Caco-2 (cell line): ENCODE measurements at regions of chr6 and their contacts with region 1.

Region 1: DNA sequence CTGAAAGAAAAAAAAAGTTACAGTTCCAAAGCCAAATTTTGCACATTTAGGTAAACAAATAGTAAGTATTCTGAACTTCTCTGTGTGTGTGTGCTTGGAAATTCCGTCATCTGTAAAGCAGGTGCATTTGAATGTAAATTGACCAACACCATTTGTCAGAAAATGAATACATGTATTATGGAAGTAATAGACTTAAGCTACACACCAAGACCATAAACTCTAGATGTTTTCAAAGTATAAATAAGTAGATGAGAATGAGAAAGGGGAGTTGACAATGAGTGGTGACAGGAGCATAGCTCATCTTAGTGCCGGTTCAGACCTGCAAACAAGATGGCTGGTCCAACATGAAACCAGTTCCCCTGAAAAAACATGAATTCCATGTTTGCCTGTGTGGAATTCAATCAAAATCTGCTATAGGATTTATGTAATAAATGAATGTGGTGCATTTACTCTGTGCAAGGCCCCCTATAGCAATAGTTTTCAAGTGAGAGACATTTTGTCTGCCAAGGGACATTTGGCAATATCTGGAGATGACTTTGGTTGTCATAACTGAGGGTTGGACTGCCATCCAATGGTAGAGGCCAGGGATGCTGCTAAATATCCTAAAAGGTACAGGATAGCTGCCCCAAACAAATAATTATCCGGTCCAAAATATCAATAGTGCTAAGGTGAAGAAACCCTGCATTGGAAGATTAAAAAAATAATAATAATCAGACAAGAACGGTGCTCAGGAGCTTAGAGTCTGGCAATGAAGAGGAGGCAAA is 11.0 kb upstream of the FILIP1 start:
- DNase-seq: no peak
- H3K4me3 ChIP-seq: no peak overlapping the region
- H3K4me3 Mint-ChIP-seq: no peak overlapping the region
- H3K27ac Mint-ChIP-seq: no peak overlapping the region
- H3K4me1 ChIP-seq: no peaks in the 10 kb centered on the region
- H3K4me1 Mint-ChIP-seq: no peaks in the 10 kb centered on the region
- H3K27me3 ChIP-seq: no peaks in the 10 kb centered on the region
- H3K27me3 Mint-ChIP-seq: no peaks in the 10 kb centered on the region
- CTCF ChIP-seq: no peak

Region 2: DNA sequence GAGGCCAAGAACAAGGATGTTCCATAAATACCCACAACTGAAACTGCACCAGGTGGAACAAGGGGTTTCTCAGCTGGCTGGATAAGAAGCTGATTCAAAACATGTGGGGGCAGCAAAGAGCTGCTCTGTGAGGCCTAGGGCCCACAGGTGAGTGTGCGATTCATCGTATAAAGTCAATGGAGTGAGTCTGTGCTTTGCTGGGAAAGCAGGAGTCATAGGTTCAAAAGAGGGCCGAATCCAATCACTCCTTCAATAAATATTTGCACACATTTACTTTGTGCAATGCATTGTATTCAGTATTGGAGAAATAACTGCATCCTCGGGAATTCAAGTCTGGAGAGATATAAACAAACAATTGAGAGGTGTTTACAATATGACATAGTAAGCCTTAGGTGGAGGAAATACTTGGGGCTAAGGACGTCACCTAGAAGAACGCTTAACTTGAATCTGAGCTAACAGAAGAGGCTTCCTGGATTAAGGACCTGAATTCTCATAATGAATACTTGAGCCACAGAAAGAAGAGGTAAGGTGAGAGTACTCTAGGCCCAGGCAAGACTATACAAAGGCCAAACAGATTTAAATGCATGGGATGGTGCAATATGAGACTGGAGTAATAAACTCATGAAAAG is 136.4 kb before region 1 on chr6:
- CTCF ChIA-PET with region 1: no interaction called
- POLR2A ChIA-PET with region 1: no interaction called
- intact Hi-C with region 1: loop called (anchors 1 kb)
- DNase-seq: peak; percentile 50 to 65
- H3K4me3 ChIP-seq: no peak overlapping the region
- H3K4me3 Mint-ChIP-seq: no peak overlapping the region
- H3K27ac Mint-ChIP-seq: no peak overlapping the region
- H3K4me1 ChIP-seq: no peaks in the 10 kb centered on the region; the same call in 1 of the 2 replicates
- H3K4me1 Mint-ChIP-seq: no peaks in the 10 kb centered on the region
- H3K27me3 ChIP-seq: no peaks in the 10 kb centered on the region
- H3K27me3 Mint-ChIP-seq: peaks cover 3% of the 10 kb centered on the region
- CTCF ChIP-seq: peak; percentile 51 to 56